HCT116 (cell line): ENCODE measurements at regions of chr19 and their contacts with region 1.

Region 1: GRCh38 chr19:45496349-45496953 is 396 bp downstream of the RTN2 start:
- DNase-seq: no peak
- ATAC-seq: peak; percentile 17
- H3K4me3 ChIP-seq: peak overlapping the region; percentile 53 to 64
- H3K27ac ChIP-seq: peak overlapping the region; percentile 47; the same call in 1 of the 2 replicates
- H3K4me1 ChIP-seq: peaks cover 25 to 53% of the 10 kb centered on the region in 2 experiments
- H3K27me3 ChIP-seq: peaks cover 10% of the 10 kb centered on the region; the same call in 1 of the 2 replicates
- CTCF ChIP-seq: no peak
- POLR2A ChIP-seq: no peak
- RAD21 ChIP-seq: no peak

Region 2: GRCh38 chr19:45485305-45486077 is 11.0 kb before region 1 on chr19:
- CTCF ChIA-PET with region 1: interaction called, 33 read pairs
- POLR2A ChIA-PET with region 1: interaction called, 3 read pairs
- RAD21 ChIA-PET with region 1: no interaction called
- intact Hi-C with region 1: no loop called
- DNase-seq: peak; percentile 91
- ATAC-seq: peak; percentile 95
- H3K4me3 ChIP-seq: peak overlapping the region; percentile 41 to 51
- H3K27ac ChIP-seq: peak overlapping the region; percentile 44; the same call in 1 of the 2 replicates
- H3K4me1 ChIP-seq: peaks cover 13 to 28% of the 10 kb centered on the region in 2 experiments
- H3K27me3 ChIP-seq: no peaks in the 10 kb centered on the region
- CTCF ChIP-seq: peak; percentile 68 to 94 (median 86)
- POLR2A ChIP-seq: no peak
- RAD21 ChIP-seq: peak; percentile 64